ENCODE measurements at regions of chr11 and their contacts with region 1.

Region 1: DNA sequence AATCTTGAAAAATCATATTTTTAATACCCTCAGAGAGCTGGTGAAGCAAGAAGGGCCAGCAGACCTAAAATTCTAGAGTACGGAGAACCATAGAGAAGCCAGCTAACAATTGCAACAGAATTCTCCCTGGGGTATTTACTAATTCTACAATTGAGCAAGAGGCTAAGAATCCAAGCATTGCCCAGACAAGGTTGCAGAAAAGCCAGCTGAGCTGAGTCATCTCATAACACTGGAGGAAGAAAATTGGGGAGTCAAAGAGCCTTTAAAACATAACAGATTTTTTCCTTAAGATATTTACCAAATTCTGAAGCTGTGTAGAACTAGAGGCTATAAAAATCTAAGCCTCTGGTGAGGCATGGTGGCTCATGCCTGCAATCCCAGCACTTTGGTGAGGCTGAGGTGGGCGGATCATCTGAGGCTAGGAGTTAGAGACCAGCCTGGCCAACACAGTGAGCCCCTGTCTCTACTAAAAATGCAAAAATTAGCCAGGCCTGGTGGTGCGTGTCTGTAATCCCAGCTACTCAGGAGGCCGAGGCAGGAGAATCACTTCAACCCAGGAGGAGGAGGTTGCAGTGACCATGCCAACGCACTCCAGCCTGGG is 13.6 kb upstream of the TMEM216 start:
- DNase-seq: no peak
- H3K4me3 ChIP-seq: no peak overlapping the region
- H3K27ac ChIP-seq: no peak overlapping the region
- H3K4me1 ChIP-seq: no peaks in the 10 kb centered on the region
- H3K27me3 ChIP-seq: no peaks in the 10 kb centered on the region
- CTCF ChIP-seq: no peak
- POLR2A ChIP-seq: no peak

Region 2: GRCh38 chr11:61254403-61255025 is 124.3 kb before region 1 on chr11:
- intact Hi-C with region 1: loop called (anchors 10 kb)
- DNase-seq: peak; percentile 56 to 61
- H3K4me3 ChIP-seq: no peak overlapping the region
- H3K27ac ChIP-seq: no peak overlapping the region
- H3K4me1 ChIP-seq: peaks cover 16 to 30% of the 10 kb centered on the region in 2 donors
- H3K27me3 ChIP-seq: no peaks in the 10 kb centered on the region
- CTCF ChIP-seq: peak in 5 of 6 experiments; percentile 68 to 89 (median 79)
- POLR2A ChIP-seq: no peak